Activated CD4-positive, alpha-beta T cell treated with anti-CD3 and anti-CD28 coated beads for 36 hours (primary cell): ENCODE measurements at regions of chr16 and their contacts with region 1.

Region 1: DNA sequence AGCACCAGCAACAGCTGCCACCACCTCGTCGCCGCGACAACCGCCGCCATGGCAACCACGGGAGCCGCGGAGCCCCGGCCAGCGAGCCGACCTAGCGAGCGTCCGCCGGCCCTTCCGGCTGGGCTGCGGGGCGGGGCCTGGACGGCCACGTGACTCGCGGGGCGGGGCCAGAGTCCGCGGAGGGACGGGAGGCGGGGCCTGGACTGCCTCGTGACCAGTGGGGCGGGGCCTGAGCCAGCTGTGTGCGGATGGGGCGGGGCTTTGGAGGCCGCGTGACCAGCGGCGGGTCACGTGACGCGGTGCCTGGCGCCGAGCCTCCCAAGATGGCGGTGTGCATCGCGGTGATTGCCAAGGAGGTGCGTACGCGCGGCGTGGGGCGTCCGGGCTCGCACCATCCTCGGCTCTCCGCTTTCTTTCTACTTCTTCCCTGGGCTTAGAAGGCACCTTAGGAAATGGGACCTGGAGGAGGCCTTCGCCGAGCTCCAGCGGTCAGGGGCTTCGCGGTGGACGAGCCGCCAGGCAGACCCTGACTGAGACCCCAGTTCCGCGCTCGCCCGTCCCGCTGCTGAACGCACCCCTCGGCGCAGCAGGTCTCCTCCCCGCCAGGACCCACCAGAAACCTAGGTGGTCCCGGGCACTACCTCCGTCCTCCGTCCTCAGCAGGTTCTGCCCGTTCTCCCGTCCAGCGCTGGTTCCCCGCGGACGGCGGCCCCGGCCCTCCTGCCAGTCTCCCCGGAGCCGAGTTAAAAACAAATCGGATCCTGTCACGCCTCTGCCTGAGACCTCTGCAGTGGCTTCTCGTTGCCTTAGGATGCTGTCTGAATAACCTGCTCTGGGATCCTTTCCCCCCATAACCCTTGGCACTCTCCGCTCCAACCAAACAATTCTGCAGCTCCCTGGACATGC is at the starts of genes GALNS and TRAPPC2L:
- DNase-seq: peak; percentile 100
- ATAC-seq: peak; percentile 93
- H3K4me3 Mint-ChIP-seq: peak within 1 kb of the TSS; percentile 100
- H3K27ac Mint-ChIP-seq: peak within 1 kb of the TSS; percentile 97
- H3K4me1 Mint-ChIP-seq: peaks cover 22% of the 10 kb centered on the region
- H3K27me3 Mint-ChIP-seq: no peaks in the 10 kb centered on the region
- total RNA-seq, gene GALNS: 20.1 TPM
- total RNA-seq, gene TRAPPC2L: 43.3 to 50.7 TPM

Region 2: DNA sequence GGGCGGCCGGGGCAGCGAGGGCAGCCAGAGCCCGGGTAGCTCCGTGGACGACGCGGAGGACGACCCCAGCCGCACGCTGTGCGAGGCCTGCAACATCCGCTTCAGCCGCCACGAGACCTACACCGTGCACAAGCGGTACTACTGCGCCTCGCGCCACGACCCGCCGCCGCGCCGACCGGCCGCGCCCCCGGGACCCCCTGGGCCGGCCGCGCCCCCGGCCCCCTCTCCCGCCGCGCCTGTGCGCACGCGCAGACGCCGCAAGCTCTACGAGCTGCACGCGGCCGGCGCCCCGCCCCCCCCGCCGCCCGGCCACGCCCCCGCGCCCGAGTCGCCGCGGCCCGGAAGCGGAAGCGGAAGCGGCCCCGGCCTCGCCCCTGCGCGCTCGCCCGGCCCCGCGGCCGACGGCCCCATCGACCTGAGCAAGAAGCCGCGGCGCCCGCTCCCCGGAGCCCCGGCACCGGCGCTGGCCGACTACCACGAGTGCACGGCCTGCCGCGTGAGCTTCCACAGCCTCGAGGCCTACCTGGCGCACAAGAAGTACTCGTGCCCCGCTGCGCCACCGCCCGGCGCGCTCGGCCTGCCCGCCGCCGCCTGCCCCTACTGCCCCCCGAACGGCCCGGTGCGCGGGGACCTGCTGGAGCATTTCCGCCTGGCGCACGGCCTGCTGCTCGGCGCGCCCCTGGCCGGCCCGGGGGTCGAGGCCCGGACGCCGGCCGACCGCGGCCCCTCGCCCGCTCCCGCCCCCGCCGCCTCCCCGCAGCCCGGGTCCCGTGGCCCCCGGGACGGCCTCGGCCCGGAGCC is 322.9 kb before region 1 on chr16:
- CTCF ChIA-PET with region 1: no interaction called
- POLR2A ChIA-PET with region 1: no interaction called
- intact Hi-C with region 1: loop called in 1 of 2 experiments (anchors 1 kb)
- DNase-seq: peak; percentile 89
- ATAC-seq: peak; percentile 78
- H3K4me3 Mint-ChIP-seq: peak overlapping the region; percentile 74
- H3K27ac Mint-ChIP-seq: no peak overlapping the region
- H3K4me1 Mint-ChIP-seq: peaks cover 7% of the 10 kb centered on the region
- H3K27me3 Mint-ChIP-seq: peaks cover 4% of the 10 kb centered on the region

Region 3: GRCh38 chr16:88686439-88687253 is 170.4 kb before region 1 on chr16 and contains the start of gene SNAI3:
- CTCF ChIA-PET with region 1: interaction called, 3 read pairs
- POLR2A ChIA-PET with region 1: no interaction called
- intact Hi-C with region 1: loop called in 1 of 2 experiments (anchors 1 kb)
- DNase-seq: peak; percentile 91
- ATAC-seq: peak; percentile 69
- H3K4me3 Mint-ChIP-seq: peak within 1 kb of the TSS; percentile 70
- H3K27ac Mint-ChIP-seq: peak within 1 kb of the TSS; percentile 37
- H3K4me1 Mint-ChIP-seq: peaks cover 42% of the 10 kb centered on the region
- H3K27me3 Mint-ChIP-seq: no peaks in the 10 kb centered on the region
- total RNA-seq, gene SNAI3: 3.6 to 4.1 TPM

Region 4: GRCh38 chr16:88785106-88785924 is 71.8 kb before region 1 on chr16 and contains the start of gene PIEZO1:
- CTCF ChIA-PET with region 1: interaction called, 3 read pairs
- POLR2A ChIA-PET with region 1: no interaction called
- intact Hi-C with region 1: loop called in 1 of 2 experiments (anchors 1 kb)
- DNase-seq: peak; percentile 85
- ATAC-seq: peak; percentile 5
- H3K4me3 Mint-ChIP-seq: peak within 1 kb of the TSS; percentile 66
- H3K27ac Mint-ChIP-seq: peak within 1 kb of the TSS; percentile 78
- H3K4me1 Mint-ChIP-seq: peaks cover 44% of the 10 kb centered on the region
- H3K27me3 Mint-ChIP-seq: no peaks in the 10 kb centered on the region
- total RNA-seq, gene PIEZO1: 105 to 126 TPM

Region 5: GRCh38 chr16:89171463-89172170 is 314.5 kb after region 1 on chr16 and contains the start of gene CDH15:
- CTCF ChIA-PET with region 1: interaction called, 3 read pairs
- POLR2A ChIA-PET with region 1: no interaction called
- intact Hi-C with region 1: loop called (anchors 1 to 10 kb)
- DNase-seq: peak; percentile 99
- ATAC-seq: peak; percentile 97
- H3K4me3 Mint-ChIP-seq: peak within 1 kb of the TSS; percentile 43
- H3K27ac Mint-ChIP-seq: peak within 1 kb of the TSS; percentile 38
- H3K4me1 Mint-ChIP-seq: peaks cover 7% of the 10 kb centered on the region
- H3K27me3 Mint-ChIP-seq: peaks cover 3% of the 10 kb centered on the region
- total RNA-seq, gene CDH15: not detected

Region 6: GRCh38 chr16:89241187-89242007 is 384.3 kb after region 1 on chr16:
- CTCF ChIA-PET with region 1: interaction called, 3 read pairs
- POLR2A ChIA-PET with region 1: no interaction called
- intact Hi-C with region 1: loop called in 1 of 2 experiments (anchors 1 kb)
- DNase-seq: peak; percentile 83
- ATAC-seq: peak; percentile 83
- H3K4me3 Mint-ChIP-seq: peak overlapping the region; percentile 87
- H3K27ac Mint-ChIP-seq: peak overlapping the region; percentile 100
- H3K4me1 Mint-ChIP-seq: peaks cover 14% of the 10 kb centered on the region
- H3K27me3 Mint-ChIP-seq: no peaks in the 10 kb centered on the region

Region 7: DNA sequence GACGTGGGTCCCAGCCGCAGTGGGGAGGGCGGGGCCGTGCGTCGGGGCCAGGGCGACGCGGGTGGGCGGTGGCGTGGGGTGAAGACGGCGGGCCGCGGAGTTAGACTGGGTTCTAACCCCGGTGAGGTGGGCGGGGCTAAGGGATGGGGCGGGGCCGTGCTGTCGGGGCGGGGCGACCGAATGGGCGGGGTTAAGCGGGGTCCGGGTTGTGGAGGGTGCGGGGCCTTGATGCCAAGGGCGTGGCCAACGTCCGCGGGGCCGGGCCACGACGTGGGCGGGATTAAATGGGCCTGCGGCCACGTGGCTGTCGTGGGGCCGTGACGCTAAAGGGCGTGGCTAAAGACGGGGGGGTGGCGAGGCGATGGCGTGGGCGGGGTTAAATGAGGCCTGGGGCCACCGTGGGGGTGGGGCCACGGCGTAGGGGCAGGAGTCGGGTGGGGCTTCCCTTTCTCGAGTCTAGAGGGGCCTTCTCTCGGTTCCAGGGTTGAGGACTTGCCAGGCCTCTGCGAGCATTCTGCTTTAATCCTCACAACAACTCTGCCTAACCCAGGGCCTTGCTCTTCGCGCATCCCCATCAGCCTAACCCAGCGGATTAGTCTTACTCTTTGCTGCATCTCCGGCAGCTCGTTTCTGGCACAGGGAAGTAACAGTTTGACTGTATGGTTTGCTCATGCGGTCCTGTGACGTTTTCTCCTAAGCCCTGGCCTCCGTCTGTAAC is 1017.0 kb after region 1 on chr16:
- CTCF ChIA-PET with region 1: no interaction called
- POLR2A ChIA-PET with region 1: no interaction called
- intact Hi-C with region 1: loop called in 1 of 2 experiments (anchors 5 kb)
- DNase-seq: peak; percentile 99
- ATAC-seq: peak; percentile 78
- H3K4me3 Mint-ChIP-seq: peak overlapping the region; percentile 87
- H3K27ac Mint-ChIP-seq: peak overlapping the region; percentile 95
- H3K4me1 Mint-ChIP-seq: peaks cover 14% of the 10 kb centered on the region
- H3K27me3 Mint-ChIP-seq: no peaks in the 10 kb centered on the region